K562 (cell line): ENCODE measurements at regions of chr2 and their contacts with region 1.

Region 1: GRCh38 chr2:96638144-96639121 is at the start of gene KANSL3:
- DNase-seq: peak; percentile 89 to 95 (median 92)
- ATAC-seq: peak; percentile 70
- H3K4me3 ChIP-seq: peak within 1 kb of the TSS; percentile 45
- H3K27ac ChIP-seq: peak within 1 kb of the TSS; percentile 96
- H3K4me1 ChIP-seq: peaks cover 11 to 17% of the 10 kb centered on the region in 2 experiments; a peak in 4 of 5 replicates
- H3K27me3 ChIP-seq: no peaks in the 10 kb centered on the region
- CTCF ChIP-seq: peak in 1 of 3 experiments; percentile 16; a peak in 2 of 6 replicates
- EP300 ChIP-seq: peak; percentile 76
- POLR2A ChIP-seq: peak; percentile 88
- RAD21 ChIP-seq: peak in 1 of 2 experiments; percentile 34; a peak in 2 of 4 replicates
- polyA plus RNA-seq, gene KANSL3: 11.3 to 20.1 TPM

Region 2: GRCh38 chr2:96584017-96584416 is 54.4 kb before region 1 on chr2:
- CTCF ChIA-PET with region 1: no interaction called
- POLR2A ChIA-PET with region 1: no interaction called
- in situ Hi-C with region 1: no loop called
- intact Hi-C with region 1: no loop called
- DNase-seq: peak in 1 of 4 experiments; percentile 37
- ATAC-seq: no peak
- H3K4me3 ChIP-seq: no peak overlapping the region
- H3K27ac ChIP-seq: no peak overlapping the region
- H3K4me1 ChIP-seq: no peaks in the 10 kb centered on the region; a peak in 1 of 5 replicates
- H3K27me3 ChIP-seq: no peaks in the 10 kb centered on the region
- CTCF ChIP-seq: no peak
- EP300 ChIP-seq: no peak
- POLR2A ChIP-seq: no peak
- RAD21 ChIP-seq: no peak

Region 3: GRCh38 chr2:96625571-96626552 is 12.6 kb before region 1 on chr2:
- CTCF ChIA-PET with region 1: no interaction called
- POLR2A ChIA-PET with region 1: interaction called, 70 read pairs
- in situ Hi-C with region 1: no loop called
- intact Hi-C with region 1: no loop called
- DNase-seq: no peak
- ATAC-seq: no peak
- H3K4me3 ChIP-seq: no peak overlapping the region
- H3K27ac ChIP-seq: no peak overlapping the region
- H3K4me1 ChIP-seq: peaks cover 0 to 4% of the 10 kb centered on the region in 2 experiments; a peak in 3 of 5 replicates
- H3K27me3 ChIP-seq: no peaks in the 10 kb centered on the region; a peak in 1 of 5 replicates
- CTCF ChIP-seq: no peak
- EP300 ChIP-seq: no peak
- POLR2A ChIP-seq: no peak
- RAD21 ChIP-seq: no peak

Region 4: GRCh38 chr2:96649342-96649741 is 10.9 kb after region 1 on chr2:
- CTCF ChIA-PET with region 1: no interaction called
- POLR2A ChIA-PET with region 1: interaction called, 15 read pairs
- in situ Hi-C with region 1: no loop called
- intact Hi-C with region 1: no loop called
- DNase-seq: no peak
- ATAC-seq: no peak
- H3K4me3 ChIP-seq: no peak overlapping the region
- H3K27ac ChIP-seq: no peak overlapping the region
- H3K4me1 ChIP-seq: no peaks in the 10 kb centered on the region
- H3K27me3 ChIP-seq: peaks cover 18 to 34% of the 10 kb centered on the region in 2 experiments
- CTCF ChIP-seq: no peak
- EP300 ChIP-seq: no peak
- POLR2A ChIP-seq: no peak
- RAD21 ChIP-seq: no peak

Region 5: DNA sequence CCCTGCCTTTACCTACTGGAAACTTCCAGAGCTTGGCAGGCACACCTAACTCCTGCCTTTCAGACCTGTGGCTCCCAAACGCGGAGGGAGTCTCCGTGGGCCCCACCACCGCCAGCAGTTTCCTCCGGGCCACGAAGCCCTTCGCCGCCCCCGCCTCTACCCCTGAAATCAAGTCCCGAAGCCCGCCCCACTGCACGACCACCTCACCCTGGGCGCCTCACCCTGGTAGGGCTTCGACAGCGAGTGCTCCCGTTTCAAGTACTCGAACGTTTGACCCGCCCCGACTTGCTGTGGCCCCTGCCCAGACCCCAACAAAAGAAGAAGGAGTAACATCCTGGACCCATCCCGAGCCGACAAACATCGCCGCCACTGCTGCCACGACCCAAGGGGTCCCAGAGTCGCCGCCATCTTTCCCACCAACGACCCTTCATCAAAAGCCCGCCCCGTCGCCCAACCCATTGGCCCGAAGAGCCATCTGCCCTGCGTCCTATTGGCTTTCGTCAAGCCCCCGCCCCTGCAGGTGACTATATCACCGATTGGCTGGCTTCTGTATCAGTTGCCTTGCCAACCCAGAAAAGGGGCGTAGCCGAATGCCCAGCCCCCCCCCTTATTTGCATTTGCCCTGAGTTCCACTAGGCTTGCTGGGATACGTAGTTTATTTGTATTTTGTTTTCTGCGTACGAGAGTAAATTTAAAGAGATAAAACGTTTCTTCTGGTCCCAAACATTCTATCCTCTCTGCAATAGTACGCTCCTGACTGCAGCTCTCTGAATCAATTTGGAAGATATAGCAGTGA is 101.4 kb after region 1 on chr2 and contains the start of gene LMAN2L:
- CTCF ChIA-PET with region 1: no interaction called
- POLR2A ChIA-PET with region 1: no interaction called
- in situ Hi-C with region 1: no loop called
- intact Hi-C with region 1: loop called (anchors 5 kb)
- DNase-seq: peak; percentile 97 to 98 (median 98)
- ATAC-seq: peak; percentile 100
- H3K4me3 ChIP-seq: peak within 1 kb of the TSS; percentile 81
- H3K27ac ChIP-seq: peak within 1 kb of the TSS; percentile 57
- H3K4me1 ChIP-seq: peaks cover 9 to 11% of the 10 kb centered on the region in 2 experiments; a peak in 4 of 5 replicates
- H3K27me3 ChIP-seq: no peaks in the 10 kb centered on the region
- CTCF ChIP-seq: no peak
- EP300 ChIP-seq: no peak
- POLR2A ChIP-seq: peak; percentile 84
- RAD21 ChIP-seq: no peak; a peak in 1 of 4 replicates
- polyA plus RNA-seq, gene LMAN2L: 24.4 to 37.7 TPM